Activated CD4-positive, alpha-beta T cell treated with anti-CD3 and anti-CD28 coated beads for 36 hours (primary cell): ENCODE measurements at regions of chr18 and their contacts with region 1.

Region 1: DNA sequence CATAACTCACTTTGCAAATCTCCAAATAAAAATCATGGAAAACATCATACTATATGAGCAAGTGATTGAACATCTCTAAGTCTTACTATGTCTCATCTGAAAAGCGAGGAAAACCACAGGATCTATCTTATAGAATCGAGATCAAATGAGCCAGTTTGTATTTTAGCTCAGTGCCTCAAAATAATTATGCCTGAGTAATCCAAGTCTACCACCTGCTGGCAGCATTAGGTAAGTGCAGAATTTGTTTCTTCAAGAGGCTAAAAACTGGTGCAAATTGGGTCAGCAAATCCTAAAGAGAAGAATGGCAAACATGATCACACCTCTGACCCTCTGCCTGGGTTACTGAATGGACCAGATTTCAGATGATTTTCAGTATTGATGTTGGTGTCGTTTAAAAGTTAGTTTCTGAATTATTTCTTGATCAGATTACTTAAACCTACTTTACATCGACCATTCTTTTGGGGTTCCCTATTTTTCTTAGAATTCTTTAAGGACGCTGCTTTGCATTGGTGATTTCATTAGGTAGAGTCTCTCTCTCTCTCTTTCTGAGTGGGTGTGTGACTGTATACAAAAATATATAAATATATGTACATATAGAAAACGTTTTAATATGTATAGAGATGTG is 12.7 kb upstream of the FHOD3 start:
- DNase-seq: peak; percentile 52
- ATAC-seq: peak; percentile 44
- H3K4me3 Mint-ChIP-seq: no peak overlapping the region
- H3K27ac Mint-ChIP-seq: no peak overlapping the region
- H3K4me1 Mint-ChIP-seq: peaks cover 2% of the 10 kb centered on the region
- H3K27me3 Mint-ChIP-seq: peaks cover 18% of the 10 kb centered on the region

Region 2: GRCh38 chr18:35407871-35408481 is 876.8 kb before region 1 on chr18:
- CTCF ChIA-PET with region 1: interaction called, 3 read pairs
- POLR2A ChIA-PET with region 1: no interaction called
- intact Hi-C with region 1: loop called in 1 of 2 experiments (anchors 10 kb)
- DNase-seq: peak; percentile 49
- ATAC-seq: peak; percentile 92
- H3K4me3 Mint-ChIP-seq: no peak overlapping the region
- H3K27ac Mint-ChIP-seq: no peak overlapping the region
- H3K4me1 Mint-ChIP-seq: peaks cover 10% of the 10 kb centered on the region
- H3K27me3 Mint-ChIP-seq: peaks cover 6% of the 10 kb centered on the region

Region 3: DNA sequence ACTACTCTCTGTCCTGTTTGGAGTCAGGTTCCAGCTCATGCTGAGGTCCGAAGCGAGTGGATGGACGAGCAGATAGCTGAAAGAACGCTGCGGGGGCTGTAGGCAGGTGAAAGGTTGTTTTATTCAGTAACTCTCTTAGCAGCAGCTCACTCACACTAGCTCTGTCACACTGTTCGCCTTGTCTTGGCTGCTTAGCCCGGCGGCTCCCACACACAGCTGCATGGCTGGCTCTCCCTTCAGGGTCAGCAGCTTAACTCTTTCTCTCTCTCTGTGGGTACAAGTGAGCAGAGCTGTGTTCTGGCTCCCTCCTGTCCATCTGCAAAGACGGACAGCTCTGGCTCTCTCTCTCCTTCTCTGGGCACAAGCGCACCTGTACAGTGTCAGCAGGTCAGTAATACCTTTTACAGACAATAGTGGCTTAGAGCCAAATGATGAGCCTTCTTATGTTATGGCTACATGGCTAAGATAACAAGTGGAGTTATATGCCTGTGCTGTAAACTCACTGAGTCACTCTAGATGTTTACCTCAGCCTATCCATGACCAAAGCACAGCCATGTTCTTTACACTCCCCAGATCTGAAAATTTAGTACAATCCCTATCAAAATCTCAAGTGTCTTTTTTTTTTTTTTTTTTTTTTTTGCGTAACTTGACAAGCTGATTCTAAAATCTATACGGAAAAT is 554.0 kb before region 1 on chr18:
- CTCF ChIA-PET with region 1: no interaction called
- POLR2A ChIA-PET with region 1: no interaction called
- intact Hi-C with region 1: no loop called
- DNase-seq: no peak
- ATAC-seq: no peak
- H3K4me3 Mint-ChIP-seq: no peak overlapping the region
- H3K27ac Mint-ChIP-seq: no peak overlapping the region
- H3K4me1 Mint-ChIP-seq: no peaks in the 10 kb centered on the region
- H3K27me3 Mint-ChIP-seq: peaks cover 4% of the 10 kb centered on the region

Region 4: DNA sequence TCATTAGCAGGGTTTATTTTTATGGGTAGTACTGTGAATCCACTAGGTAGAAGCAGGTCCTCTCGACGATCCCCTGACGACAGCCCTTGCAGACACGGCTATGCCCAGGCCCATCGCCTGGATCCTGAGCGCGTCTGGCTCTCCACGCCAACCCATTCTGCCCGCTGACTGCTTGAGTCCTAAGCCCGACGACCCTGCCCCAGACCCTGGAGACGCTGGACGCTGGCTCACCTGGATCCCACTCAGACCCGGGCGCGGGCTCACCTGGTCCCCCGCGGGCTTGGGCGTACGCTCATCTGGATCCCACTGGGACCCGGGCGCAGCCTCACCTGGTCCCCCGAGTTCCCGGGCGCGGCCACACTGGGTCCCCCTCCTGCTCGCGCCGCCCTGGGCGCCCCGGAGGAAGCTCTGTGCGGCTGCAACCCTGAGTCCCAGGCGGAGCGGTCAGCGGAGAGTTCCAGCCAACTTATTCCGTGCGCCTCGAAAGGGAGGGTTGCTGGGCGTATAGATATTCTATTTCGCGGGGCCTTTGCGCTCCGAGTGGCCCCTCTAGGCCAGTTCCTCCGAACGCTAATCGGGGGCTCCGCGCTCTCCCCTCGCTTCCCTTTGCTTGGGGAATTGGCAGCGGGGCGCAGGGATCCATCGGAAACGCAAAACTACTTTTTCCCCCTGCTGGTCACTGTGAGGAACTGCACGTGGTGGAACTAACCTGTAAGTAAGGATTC is 334.7 kb before region 1 on chr18:
- CTCF ChIA-PET with region 1: no interaction called
- POLR2A ChIA-PET with region 1: no interaction called
- intact Hi-C with region 1: loop called in 1 of 2 experiments (anchors 1 kb)
- DNase-seq: peak; percentile 67
- ATAC-seq: peak; percentile 70
- H3K4me3 Mint-ChIP-seq: peak overlapping the region; percentile 75
- H3K27ac Mint-ChIP-seq: no peak overlapping the region
- H3K4me1 Mint-ChIP-seq: peaks cover 1% of the 10 kb centered on the region
- H3K27me3 Mint-ChIP-seq: peaks cover 19% of the 10 kb centered on the region

Region 5: DNA sequence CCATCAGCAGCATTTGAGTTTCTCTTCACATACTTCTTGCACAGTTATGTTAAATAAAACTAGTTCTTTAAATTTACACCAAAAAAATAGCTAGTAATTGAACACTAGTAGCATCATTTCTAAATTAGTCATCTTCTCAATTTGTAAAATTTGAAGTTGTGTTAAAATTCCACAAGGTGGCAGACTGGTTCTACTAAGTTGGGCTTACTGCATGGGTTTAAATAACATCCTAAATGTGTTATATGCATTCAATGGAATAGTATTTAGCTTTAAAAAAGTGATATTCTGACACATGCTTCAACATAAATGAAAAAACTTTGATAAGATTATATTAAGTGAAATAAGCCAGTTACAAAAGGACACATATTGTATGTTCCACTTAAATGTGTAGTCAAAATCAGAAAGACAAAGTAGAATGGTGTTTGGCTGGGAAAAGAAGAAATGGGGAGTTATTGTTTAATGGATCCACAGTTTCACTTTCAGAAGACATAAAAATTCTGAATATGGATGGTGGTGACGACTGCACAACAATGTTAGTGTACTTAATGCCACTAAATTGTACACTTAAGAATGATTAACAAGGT is 188.8 kb before region 1 on chr18:
- CTCF ChIA-PET with region 1: interaction called, 23 read pairs
- POLR2A ChIA-PET with region 1: no interaction called
- intact Hi-C with region 1: loop called (anchors 1 kb)
- DNase-seq: no peak
- ATAC-seq: peak; percentile 49
- H3K4me3 Mint-ChIP-seq: no peak overlapping the region
- H3K27ac Mint-ChIP-seq: no peak overlapping the region
- H3K4me1 Mint-ChIP-seq: peaks cover 3% of the 10 kb centered on the region
- H3K27me3 Mint-ChIP-seq: no peaks in the 10 kb centered on the region

Region 6: GRCh38 chr18:36572135-36572856 is 287.5 kb after region 1 on chr18:
- CTCF ChIA-PET with region 1: no interaction called
- POLR2A ChIA-PET with region 1: no interaction called
- intact Hi-C with region 1: loop called in 1 of 2 experiments (anchors 5 kb)
- DNase-seq: peak; percentile 60
- ATAC-seq: peak; percentile 51
- H3K4me3 Mint-ChIP-seq: no peak overlapping the region
- H3K27ac Mint-ChIP-seq: no peak overlapping the region
- H3K4me1 Mint-ChIP-seq: peaks cover 2% of the 10 kb centered on the region
- H3K27me3 Mint-ChIP-seq: peaks cover 2% of the 10 kb centered on the region